Spleen (tissue), 13 donors: ENCODE measurements at regions of chr13 and their contacts with region 1.

Region 1: DNA sequence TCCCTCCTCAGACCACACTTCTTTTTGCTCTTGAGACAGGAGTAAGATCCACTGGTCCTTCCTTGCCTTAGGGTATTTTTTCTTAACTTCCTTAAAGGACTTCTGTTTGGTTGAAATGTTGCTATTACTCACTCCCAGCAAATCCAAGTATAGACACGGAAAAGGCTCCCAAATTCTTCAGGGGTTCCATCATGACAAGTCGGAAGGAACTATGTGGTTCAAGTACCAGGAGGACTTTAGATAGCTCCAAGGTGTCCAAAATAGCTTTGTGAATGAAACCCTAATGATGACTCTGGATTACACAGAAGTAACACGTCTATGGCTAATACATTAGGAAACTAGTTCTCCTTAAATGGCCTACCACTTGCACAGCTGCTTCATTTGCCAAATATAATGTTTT is 238.7 kb downstream of the KCTD12 start:
- DNase-seq: no peak
- H3K4me3 ChIP-seq: no peak overlapping the region
- H3K27ac ChIP-seq: no peak overlapping the region
- H3K4me1 ChIP-seq: no peaks in the 10 kb centered on the region
- H3K27me3 ChIP-seq: peaks cover 0 to 4% (median 0%) of the 10 kb centered on the region in 7 donors
- CTCF ChIP-seq: no peak
- POLR2A ChIP-seq: no peak

Region 2: DNA sequence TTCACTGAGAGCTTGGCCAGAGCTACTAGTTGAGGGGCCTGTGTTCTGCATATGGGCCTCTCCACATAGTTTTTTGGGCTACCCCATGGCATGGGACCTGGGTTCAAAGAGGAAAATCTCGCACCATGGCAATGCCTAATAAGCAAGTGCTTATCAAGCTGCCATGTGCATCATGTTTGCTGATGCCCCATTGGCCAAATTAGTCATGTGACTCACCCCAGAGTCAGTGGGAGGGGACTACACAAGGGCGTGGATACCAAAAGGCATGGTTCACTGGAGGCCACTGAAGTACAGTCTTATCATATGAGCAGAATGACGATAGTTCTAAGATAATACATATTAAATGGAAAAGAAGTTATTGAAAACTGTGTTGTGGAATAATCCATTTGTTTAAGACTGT is 796.6 kb before region 1 on chr13:
- intact Hi-C with region 1: loop called (anchors 5 kb)
- DNase-seq: no peak
- H3K4me3 ChIP-seq: no peak overlapping the region
- H3K27ac ChIP-seq: no peak overlapping the region
- H3K4me1 ChIP-seq: no peaks in the 10 kb centered on the region
- H3K27me3 ChIP-seq: no peaks in the 10 kb centered on the region
- CTCF ChIP-seq: no peak
- POLR2A ChIP-seq: no peak

Region 3: DNA sequence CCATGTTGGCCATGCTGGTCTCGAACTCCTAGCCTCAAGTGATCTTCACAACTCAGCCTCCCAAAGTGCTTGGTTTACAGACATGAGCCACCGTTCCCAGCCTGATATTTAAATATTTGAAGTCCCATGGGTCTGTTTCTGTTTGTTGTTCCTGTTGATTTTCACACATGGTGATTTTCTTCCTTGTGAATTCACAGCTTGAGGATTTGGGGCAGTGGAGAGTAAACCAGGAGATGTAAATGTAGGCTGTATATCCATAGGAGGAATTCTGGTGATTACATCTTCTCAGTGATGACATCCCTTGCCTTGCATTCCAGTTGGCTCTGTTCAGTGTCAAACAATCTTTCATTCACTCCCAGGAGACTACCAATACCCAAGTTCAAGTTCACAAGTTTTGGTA is 233.2 kb before region 1 on chr13:
- intact Hi-C with region 1: no loop called
- DNase-seq: no peak
- H3K4me3 ChIP-seq: no peak overlapping the region
- H3K27ac ChIP-seq: no peak overlapping the region
- H3K4me1 ChIP-seq: no peaks in the 10 kb centered on the region
- H3K27me3 ChIP-seq: no peaks in the 10 kb centered on the region
- CTCF ChIP-seq: no peak
- POLR2A ChIP-seq: no peak